Naive thymus-derived CD8-positive, alpha-beta T cell (primary cell): ENCODE measurements at regions of chr15 and their contacts with region 1.

Region 1: DNA sequence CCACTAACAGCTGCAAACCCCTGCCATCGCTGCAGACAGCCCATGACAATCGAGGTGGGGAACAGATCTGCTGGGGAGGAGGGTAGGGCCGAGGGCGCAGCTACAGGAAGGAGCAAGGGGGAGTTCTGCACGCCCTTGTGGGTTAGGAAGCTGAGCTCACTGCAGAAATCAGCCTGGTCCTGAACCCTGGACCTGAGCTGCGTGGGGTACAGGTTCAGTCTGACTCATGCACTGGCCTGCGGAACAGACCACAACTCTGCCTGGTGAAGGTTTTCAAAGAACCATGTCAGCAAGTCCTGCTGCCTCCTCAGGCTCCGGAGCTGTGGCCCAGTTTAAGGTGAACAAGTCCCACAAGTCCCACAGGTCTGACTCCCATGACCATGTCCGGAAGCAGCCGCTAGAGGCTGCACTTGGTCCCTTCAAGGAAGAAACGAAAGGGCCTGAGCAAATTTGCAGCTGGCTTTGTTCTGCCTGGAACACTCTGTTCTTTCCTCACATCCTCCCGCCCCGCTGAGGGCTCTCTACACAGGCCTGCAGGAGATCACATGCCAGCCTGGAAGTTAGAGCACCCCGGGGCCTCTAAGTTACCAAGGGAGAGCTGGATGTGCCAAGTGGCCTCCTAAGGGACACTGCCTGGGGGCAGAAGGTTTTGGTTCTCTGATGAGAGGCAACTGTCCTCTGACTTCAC is 49.4 kb upstream of the AKAP13 start:
- DNase-seq: peak; percentile 18 to 83 (median 54)
- ATAC-seq: peak; percentile 70 to 75
- H3K4me3 Mint-ChIP-seq: peak overlapping the region; percentile 85 to 97 (median 92)
- H3K27ac Mint-ChIP-seq: peak overlapping the region; percentile 82 to 98 (median 94)
- H3K4me1 Mint-ChIP-seq: peaks cover 24 to 65% (median 53%) of the 10 kb centered on the region in 4 donors
- H3K27me3 Mint-ChIP-seq: no peaks in the 10 kb centered on the region

Region 2: GRCh38 chr15:85316244-85316934 is 14.7 kb before region 1 on chr15:
- POLR2A ChIA-PET with region 1: interaction called, 13 read pairs
- DNase-seq: peak in 5 of 10 donors; percentile 14 to 39 (median 25)
- ATAC-seq: peak; percentile 89 to 94
- H3K4me3 Mint-ChIP-seq: peak overlapping the region; percentile 37 to 77 (median 67)
- H3K27ac Mint-ChIP-seq: peak overlapping the region; percentile 35 to 90 (median 84)
- H3K4me1 Mint-ChIP-seq: peaks cover 13 to 60% (median 36%) of the 10 kb centered on the region in 4 donors
- H3K27me3 Mint-ChIP-seq: no peaks in the 10 kb centered on the region

Region 3: DNA sequence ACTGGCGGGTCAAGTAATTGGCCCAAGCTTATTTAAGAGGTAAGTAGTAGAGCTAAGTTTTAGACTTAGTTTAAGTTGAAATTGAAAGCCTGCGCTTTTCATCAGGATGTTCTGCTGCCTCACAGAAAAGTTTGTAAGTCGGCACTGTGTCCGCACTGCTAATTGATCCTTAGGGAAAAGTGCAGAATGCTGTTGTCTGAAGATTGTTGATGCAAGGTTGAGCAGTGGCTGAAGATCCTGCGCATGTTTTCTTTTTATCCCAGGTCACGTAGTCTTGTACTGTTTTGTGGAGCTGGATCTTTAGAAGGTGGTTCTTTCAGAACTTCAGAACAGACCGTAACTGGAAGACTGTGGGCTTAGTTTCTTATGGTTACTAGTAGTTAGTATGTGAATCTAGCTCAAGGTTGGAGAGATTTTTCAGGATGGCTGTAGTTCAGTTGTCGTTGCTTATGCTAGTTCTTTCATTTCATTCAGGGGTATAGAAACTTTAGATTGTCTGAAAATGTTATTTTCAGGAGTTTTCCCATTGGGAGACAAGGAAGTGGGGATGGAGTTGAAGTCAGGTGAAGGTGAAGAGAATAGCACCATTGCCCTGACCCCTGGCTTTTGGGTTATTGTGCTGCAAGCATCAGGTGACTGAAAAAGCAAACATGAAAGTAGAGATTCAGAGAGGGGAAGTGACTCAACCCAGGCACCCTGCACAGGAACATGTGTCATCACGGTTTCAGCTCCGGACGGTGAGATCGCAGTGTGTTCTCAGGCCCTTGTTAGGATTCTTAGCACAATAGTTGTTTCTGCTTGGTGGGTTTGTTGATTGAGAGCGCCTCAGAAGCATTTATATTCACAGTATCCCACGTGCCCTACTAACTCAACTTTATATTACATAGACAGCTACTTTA is 82.2 kb after region 1 on chr15:
- POLR2A ChIA-PET with region 1: interaction called, 16 read pairs
- DNase-seq: peak; percentile 36 to 78 (median 52)
- ATAC-seq: peak; percentile 97
- H3K4me3 Mint-ChIP-seq: peak overlapping the region in 9 of 10 donors; percentile 36 to 74 (median 63)
- H3K27ac Mint-ChIP-seq: peak overlapping the region; percentile 22 to 95 (median 84)
- H3K4me1 Mint-ChIP-seq: peaks cover 30 to 80% (median 71%) of the 10 kb centered on the region in 4 donors
- H3K27me3 Mint-ChIP-seq: no peaks in the 10 kb centered on the region